G401 (cell line): ENCODE measurements at regions of chr9 and their contacts with region 1.

Region 1: GRCh38 chr9:94802793-94803192 is 76.3 kb downstream of the AOPEP start:
- DNase-seq: no peak

Region 2: DNA sequence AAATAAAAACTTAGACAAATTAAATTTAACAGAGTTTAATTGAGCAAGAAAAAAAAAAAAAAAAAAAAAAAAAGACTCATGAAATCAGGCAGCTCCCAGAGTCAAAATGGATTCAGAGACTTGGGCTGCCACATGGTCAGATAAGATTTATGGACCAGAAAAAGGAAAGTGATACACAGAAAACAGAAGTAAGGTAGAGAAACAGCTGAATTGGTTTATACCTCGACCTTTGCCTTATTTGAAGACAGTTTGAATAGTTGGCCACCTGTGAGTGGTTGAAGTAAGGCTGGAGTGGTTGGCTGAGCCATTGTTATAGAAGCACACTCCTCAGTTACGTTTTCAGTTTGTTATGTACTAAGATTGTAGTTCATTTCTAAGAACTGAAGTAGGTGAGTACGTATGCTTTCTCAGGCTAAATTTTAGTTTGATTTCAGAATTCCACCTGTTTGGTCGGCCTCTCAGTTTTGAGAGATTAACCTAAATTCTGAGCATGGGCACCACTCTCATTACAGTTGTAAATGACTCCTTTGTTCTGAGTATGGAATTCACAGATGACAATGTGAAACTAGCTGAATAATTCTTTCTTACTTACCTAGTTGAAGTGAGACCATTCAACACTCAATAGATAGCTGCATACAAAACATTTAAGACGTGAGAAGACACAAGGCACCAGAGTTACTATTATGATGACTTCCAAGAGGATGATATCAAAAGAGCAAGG is 72.7 kb after region 1 on chr9:
- in situ Hi-C with region 1: loop called (anchors 5 kb)
- DNase-seq: no peak